ENCODE measurements at regions of chr11 and their contacts with region 1.

Region 1: DNA sequence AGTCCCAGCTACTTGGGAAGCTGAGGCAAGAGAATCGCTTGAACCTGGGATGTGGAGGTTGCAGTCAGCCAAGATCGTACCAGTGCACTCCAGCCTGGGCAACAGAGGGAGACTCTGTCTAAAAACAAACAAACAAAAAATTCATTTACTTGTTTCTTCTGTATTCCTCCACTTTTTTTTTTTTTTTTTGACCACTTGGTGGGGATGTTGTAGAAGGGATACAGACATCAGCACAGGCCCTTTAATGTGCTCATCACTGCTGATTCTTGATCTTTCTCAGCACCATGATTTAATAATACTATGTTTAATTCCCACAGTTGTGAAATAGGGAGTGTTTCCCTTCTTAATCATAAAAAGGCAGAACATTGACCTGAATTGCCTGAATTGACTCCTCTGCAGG is 4.5 kb downstream of the TTC9C start:
- DNase-seq: peak; percentile 57
- H3K4me3 Mint-ChIP-seq: no peak overlapping the region
- H3K27ac Mint-ChIP-seq: no peak overlapping the region
- H3K4me1 Mint-ChIP-seq: no peaks in the 10 kb centered on the region
- H3K27me3 Mint-ChIP-seq: no peaks in the 10 kb centered on the region
- CTCF ChIP-seq: peak; percentile 42

Region 2: DNA sequence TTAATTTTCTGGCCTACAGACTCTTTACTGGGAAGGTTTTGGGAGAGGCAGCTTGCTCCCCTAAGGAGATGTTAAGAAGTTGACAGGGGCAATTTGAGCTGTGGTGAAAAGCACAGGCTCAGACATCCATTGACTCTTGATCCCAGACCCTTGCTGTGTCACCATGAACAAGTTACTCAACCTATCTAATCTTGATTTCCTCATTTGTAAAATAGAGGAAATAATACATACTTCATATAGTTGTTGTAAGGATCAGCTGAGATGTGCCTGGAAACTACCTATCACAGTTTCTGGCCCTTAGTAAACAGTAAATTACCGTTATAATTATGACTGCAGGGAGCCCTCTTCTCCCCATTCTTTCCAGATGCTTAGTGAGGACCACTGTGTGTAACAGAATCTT is 417.4 kb before region 1 on chr11:
- CTCF ChIA-PET with region 1: no interaction called
- POLR2A ChIA-PET with region 1: no interaction called
- intact Hi-C with region 1: no loop called
- DNase-seq: no peak
- H3K4me3 Mint-ChIP-seq: no peak overlapping the region
- H3K27ac Mint-ChIP-seq: no peak overlapping the region
- H3K4me1 Mint-ChIP-seq: no peaks in the 10 kb centered on the region
- H3K27me3 Mint-ChIP-seq: peaks cover 88% of the 10 kb centered on the region
- CTCF ChIP-seq: no peak

Region 3: DNA sequence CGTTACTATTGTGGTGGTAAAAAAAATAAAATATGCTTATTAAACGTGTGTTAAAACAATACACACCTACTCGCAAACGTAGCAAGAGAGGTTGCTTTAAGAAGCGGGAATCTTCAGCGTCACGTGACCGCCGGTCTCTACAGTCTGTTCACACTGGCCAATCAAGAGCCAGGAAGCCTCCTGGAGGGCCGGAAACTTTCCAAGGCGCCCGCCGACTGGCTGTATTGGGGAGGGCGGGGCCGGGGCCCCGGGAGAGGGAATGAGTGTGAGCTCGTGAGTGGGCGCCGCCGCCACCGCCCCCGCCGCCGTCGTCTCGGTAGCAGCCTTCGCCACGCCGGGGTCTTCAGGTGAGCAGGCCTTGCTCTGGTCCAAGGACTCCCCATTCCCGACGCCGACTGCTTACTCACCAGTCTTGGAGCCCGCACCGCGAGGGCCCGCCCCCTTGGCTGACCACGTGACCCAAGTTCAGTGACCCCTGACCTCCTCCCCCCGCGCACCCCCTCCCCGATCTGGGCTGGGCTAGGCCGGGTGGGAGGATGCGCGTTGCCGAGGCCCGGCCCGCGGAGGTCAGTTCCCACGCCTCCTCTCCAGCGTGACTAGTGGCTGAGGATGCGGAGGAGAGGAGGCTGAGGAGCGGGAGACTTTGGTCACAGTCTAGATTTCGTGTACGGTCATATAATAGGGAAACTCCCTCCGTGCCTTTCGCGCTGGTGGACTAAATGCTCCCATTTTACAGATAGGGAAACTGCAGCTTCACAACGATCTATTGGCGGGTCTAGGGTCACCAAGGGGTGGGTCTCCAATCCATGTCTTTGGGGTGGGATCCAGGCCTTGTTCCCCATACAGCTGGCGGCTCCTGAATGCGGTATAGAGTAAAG is 38.6 kb after region 1 on chr11 and contains the start of gene TAF6L:
- CTCF ChIA-PET with region 1: interaction called, 4 read pairs
- POLR2A ChIA-PET with region 1: interaction called, 67 read pairs
- intact Hi-C with region 1: loop called (anchors 2 kb)
- DNase-seq: peak; percentile 98
- H3K4me3 Mint-ChIP-seq: peak within 1 kb of the TSS; percentile 98
- H3K27ac Mint-ChIP-seq: peak within 1 kb of the TSS; percentile 95
- H3K4me1 Mint-ChIP-seq: peaks cover 5% of the 10 kb centered on the region
- H3K27me3 Mint-ChIP-seq: no peaks in the 10 kb centered on the region
- CTCF ChIP-seq: no peak
- total RNA-seq, gene TAF6L: 11.6 and 12.0 TPM in 2 replicates